Heart right ventricle (tissue), 16 donors: ENCODE measurements at regions of chr9 and their contacts with region 1.

Region 1: GRCh38 chr9:38079461-38080031 is 10.5 kb upstream of the SHB start:
- DNase-seq: no peak
- ATAC-seq: peak in 3 of 8 donors; percentile 39 to 50 (median 40)
- H3K4me3 ChIP-seq: no peak overlapping the region
- H3K27ac ChIP-seq: peak overlapping the region in 1 of 10 donors; percentile 65
- H3K4me1 ChIP-seq: peaks cover 0 to 49% (median 10%) of the 10 kb centered on the region in 9 donors
- H3K27me3 ChIP-seq: no peaks in the 10 kb centered on the region
- CTCF ChIP-seq: no peak

Region 2: DNA sequence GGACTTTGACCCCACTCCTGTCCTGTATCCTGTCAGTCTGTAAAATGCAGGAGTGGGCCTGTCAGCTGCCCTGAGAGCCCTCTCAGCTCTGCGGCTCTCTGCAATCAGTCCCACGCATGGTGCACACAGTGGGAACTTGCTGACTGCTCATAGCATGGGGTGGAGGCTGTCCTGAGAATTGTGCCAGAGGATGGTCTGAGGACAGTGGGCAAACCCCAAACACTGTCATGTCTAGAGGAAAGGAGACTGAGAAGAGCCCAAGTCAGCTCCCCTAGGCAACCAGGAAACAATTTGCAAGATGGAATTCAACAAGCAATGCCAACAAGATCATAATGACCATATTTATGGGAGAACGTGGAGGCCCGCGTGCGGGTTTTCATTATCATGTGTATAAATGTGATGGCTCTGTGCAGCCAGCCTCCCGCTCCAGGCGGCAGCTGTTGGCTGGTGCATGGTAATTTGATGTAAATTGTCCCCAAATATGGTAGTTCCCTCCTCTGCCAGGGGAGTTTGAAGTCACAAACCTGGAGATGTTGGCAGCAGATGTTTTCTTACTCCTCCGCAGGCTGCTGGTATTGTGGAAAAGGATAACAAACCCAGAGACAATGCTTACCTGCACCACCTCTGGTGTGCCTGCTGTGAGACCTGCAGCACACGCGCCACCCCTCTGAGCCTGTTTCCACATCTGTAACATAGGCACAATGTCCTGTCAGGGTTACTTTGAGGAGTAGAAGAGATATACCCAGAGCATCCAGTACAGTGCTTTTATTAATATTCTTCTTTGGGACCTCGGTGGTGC is 273.2 kb after region 1 on chr9:
- intact Hi-C with region 1: loop called in 2 of 10 experiments (anchors 5 to 10 kb)
- DNase-seq: no peak
- ATAC-seq: no peak
- H3K4me3 ChIP-seq: no peak overlapping the region
- H3K27ac ChIP-seq: no peak overlapping the region
- H3K4me1 ChIP-seq: no peaks in the 10 kb centered on the region
- H3K27me3 ChIP-seq: peaks cover 0 to 25% (median 5%) of the 10 kb centered on the region in 7 donors
- CTCF ChIP-seq: no peak